ENCODE measurements at regions of chr18 and their contacts with region 1.

Region 1: GRCh38 chr18:50287441-50288347 is at the start of gene CXXC1:
- H3K4me3 Mint-ChIP-seq: peak within 1 kb of the TSS; percentile 92
- H3K27ac Mint-ChIP-seq: peak within 1 kb of the TSS; percentile 90
- H3K4me1 Mint-ChIP-seq: peaks cover 49% of the 10 kb centered on the region
- H3K27me3 Mint-ChIP-seq: no peaks in the 10 kb centered on the region

Region 2: DNA sequence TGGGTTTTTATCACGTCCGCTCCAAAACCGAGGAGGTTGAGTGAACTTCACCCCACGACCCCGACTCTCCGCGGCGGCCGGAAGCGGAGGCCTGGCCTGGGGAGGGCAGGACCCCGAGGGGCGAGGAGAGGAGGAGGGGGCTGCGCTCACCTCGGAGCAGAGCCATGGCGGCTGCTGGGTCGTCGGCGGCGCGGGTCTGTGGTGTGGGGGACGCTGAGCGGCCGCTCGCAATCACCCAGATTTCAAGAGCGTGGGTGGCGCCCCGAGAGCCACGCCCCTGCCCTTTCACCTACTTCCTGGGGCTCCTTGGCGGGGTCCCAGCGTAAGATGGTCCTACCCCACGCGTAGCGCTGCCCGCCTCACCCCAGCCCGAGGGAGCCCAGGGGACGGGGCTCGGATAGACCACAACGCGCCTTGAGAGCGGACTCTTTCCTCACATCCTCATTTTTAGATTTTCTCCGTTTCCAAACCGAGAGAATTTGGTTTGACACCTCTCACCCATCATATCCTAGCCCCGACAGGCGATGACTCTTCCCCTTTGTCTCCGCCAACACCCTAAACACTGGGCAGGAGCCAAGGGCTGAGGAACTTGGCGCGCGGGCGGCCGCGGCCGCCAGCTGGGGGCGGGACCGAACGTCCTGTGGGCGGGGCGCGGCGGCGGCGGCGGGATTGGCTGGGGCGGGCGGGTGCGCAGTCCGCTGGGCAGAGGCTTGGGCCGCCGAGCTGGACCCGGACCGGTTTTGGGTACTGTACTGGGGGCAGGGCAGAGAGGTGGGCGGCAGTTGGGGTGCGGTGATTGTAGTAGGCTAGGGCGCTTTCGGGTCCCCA is 474.2 kb before region 1 on chr18 and contains the start of gene ACAA2:
- intact Hi-C with region 1: loop called (anchors 10 kb)
- H3K4me3 Mint-ChIP-seq: peak within 1 kb of the TSS; percentile 87
- H3K27ac Mint-ChIP-seq: peak within 1 kb of the TSS; percentile 96
- H3K4me1 Mint-ChIP-seq: peaks cover 38% of the 10 kb centered on the region
- H3K27me3 Mint-ChIP-seq: no peaks in the 10 kb centered on the region

Region 3: DNA sequence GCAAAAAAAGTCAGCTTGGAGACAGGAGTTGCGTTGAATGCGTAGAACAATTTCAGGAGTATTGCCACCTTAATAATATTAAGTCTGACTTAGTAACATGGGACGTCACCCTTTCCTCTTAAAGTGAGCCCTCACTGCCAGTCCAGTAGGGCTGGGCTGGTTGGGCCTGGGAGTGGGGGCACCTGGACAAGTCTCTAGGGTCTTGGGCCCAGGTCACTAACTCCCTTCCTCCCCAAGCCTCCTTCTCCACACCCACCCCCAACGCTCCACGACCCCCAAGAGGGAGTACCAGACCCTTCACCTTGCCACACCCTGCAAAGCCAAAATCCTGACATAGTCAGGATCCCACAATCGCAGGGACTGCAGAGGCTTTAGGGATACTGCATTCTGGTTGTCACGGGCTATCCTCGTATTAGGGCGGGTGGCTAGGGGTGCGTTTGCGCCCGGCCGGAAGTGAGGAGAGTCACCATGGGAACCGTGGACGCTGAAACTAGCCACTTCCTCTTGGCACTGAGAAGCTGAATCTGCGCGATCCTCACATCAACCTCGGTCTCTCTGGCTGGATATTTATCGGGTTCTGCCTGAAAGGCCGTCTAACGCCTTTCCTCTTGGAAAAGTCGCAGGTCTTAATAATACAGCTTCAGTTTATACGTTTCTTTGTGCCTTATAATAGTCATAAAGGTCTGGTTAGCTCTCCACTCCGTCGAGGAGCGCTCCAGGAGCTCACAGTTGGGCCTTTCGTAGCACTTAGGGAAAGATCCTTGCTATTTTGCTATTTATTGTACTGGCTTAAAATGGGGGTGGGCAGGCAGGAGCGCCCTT is 10.1 kb after region 1 on chr18:
- intact Hi-C with region 1: loop called (anchors 1 kb)
- H3K4me3 Mint-ChIP-seq: peak overlapping the region; percentile 55
- H3K27ac Mint-ChIP-seq: peak overlapping the region; percentile 81
- H3K4me1 Mint-ChIP-seq: peaks cover 14% of the 10 kb centered on the region
- H3K27me3 Mint-ChIP-seq: peaks cover 29% of the 10 kb centered on the region